GM12878 (cell line): ENCODE measurements at regions of chr6 and their contacts with region 1.

Region 1: GRCh38 chr6:42928986-42929820 is at the start of gene CNPY3:
- DNase-seq: peak; percentile 98
- ATAC-seq: peak; percentile 88
- H3K4me3 ChIP-seq: peak within 1 kb of the TSS; percentile 93
- H3K27ac ChIP-seq: peak within 1 kb of the TSS; percentile 96
- H3K4me1 ChIP-seq: peaks cover 17% of the 10 kb centered on the region
- H3K27me3 ChIP-seq: no peaks in the 10 kb centered on the region
- CTCF ChIP-seq: no peak
- EP300 ChIP-seq: peak in 1 of 2 experiments; percentile 72; a peak in 1 of 4 replicates
- POLR2A ChIP-seq: peak; percentile 87
- RAD21 ChIP-seq: no peak
- polyA plus RNA-seq, gene CNPY3: 7.2 to 14.6 TPM

Region 2: GRCh38 chr6:42978839-42979522 is 49.8 kb after region 1 on chr6 and contains the start of gene PEX6:
- CTCF ChIA-PET with region 1: interaction called, 9 read pairs
- POLR2A ChIA-PET with region 1: interaction called, 32 read pairs
- RAD21 ChIA-PET with region 1: interaction called, 31 read pairs
- SMC1A ChIA-PET with region 1: interaction called, 12 read pairs
- in situ Hi-C with region 1: no loop called
- intact Hi-C with region 1: loop called (anchors 2 kb)
- DNase-seq: peak; percentile 64
- ATAC-seq: peak; percentile 96
- H3K4me3 ChIP-seq: peak within 1 kb of the TSS; percentile 88
- H3K27ac ChIP-seq: peak within 1 kb of the TSS; percentile 33
- H3K4me1 ChIP-seq: peaks cover 13% of the 10 kb centered on the region
- H3K27me3 ChIP-seq: no peaks in the 10 kb centered on the region
- CTCF ChIP-seq: no peak
- EP300 ChIP-seq: no peak
- POLR2A ChIP-seq: peak; percentile 94
- RAD21 ChIP-seq: no peak
- polyA plus RNA-seq, gene PEX6: 0.39 to 1.2 TPM

Region 3: GRCh38 chr6:42984001-42984923 is 55.1 kb after region 1 on chr6 and contains the start of gene PPP2R5D:
- CTCF ChIA-PET with region 1: interaction called, 9 read pairs
- POLR2A ChIA-PET with region 1: interaction called, 32 read pairs
- RAD21 ChIA-PET with region 1: interaction called, 31 read pairs
- SMC1A ChIA-PET with region 1: interaction called, 12 read pairs
- in situ Hi-C with region 1: no loop called
- intact Hi-C with region 1: loop called (anchors 2 kb)
- DNase-seq: peak; percentile 94
- ATAC-seq: peak; percentile 97
- H3K4me3 ChIP-seq: peak within 1 kb of the TSS; percentile 98
- H3K27ac ChIP-seq: peak within 1 kb of the TSS; percentile 79
- H3K4me1 ChIP-seq: peaks cover 23% of the 10 kb centered on the region
- H3K27me3 ChIP-seq: no peaks in the 10 kb centered on the region
- CTCF ChIP-seq: no peak
- EP300 ChIP-seq: no peak
- POLR2A ChIP-seq: peak; percentile 92
- RAD21 ChIP-seq: no peak
- polyA plus RNA-seq, gene PPP2R5D: 1.5 to 1.6 TPM